Activated B cell treated with CpG ODN at 0.5 μM for 24 hours (primary cell): ENCODE measurements at regions of chrX and their contacts with region 1.

Region 1: DNA sequence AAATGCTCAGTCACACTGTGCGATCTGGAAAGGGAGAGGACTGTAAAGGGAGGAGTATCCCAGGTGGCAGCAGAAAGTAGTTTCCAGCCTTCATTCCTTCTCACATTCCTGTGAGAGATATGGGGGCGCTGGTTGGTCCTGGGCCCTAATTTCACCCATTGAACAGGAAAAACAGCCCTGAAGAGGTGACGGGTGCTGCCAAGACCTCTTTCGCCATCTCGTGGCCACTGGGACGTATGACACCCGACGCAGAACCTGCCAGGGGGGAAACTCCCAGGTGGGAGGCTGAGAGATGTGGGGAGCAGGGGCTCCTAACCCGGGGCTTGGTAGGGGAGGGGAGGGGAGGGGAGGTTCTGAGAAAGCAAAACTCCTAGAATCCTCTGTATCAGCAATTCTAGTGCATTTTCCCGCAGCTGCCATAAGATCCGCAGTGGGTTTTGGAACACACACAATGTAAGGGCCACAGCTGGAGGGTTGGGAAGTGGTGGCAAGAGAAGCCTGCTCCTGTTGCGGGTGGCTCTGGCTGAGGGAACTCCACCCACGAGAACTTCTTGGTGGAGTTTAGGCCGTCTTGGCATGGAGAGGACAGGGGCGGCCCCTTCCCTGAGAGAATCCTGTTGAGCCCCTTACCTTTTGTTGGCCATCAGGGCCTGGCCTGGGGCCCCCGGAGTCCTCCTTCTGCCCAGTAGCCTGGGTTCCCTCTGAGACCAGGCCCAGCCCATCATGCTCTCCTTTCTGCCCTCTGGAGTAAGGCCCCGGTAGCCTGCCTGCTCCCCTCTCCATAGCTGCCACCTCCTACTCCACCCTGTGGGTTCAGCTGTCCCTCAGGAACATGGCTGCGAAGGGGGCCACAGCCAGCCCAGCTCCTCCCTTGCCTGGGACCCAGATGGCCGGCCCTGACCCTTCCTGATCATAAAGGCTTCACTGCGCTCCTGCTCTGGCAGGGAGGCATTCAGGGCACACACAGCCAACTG is 134.1 kb downstream of the OR13H1 start:
- DNase-seq: peak; percentile 15
- ATAC-seq: peak; percentile 40
- H3K4me3 Mint-ChIP-seq: no peak overlapping the region
- H3K27ac Mint-ChIP-seq: no peak overlapping the region
- H3K4me1 Mint-ChIP-seq: no peaks in the 10 kb centered on the region
- H3K27me3 Mint-ChIP-seq: no peaks in the 10 kb centered on the region
- CTCF ChIP-seq: no peak

Region 2: DNA sequence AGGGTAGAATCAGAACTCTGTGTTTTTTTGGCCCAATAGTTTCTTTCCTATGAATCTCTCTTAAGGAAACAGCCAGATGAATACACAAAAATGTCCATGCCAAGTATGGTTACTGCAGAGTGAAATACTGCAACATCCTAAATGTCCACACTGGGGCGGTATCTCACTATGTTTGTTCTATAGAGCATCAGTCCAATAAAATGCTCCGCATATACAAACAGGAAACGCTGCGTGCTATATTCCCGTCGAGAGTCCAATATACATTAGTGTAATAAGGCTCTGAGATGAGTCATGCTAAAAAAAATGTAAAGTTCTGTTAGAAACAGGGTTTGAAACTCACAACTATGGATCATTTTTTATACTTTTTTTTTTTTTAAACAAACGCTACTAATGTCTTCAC is 702.0 kb before region 1 on chrX:
- CTCF ChIA-PET with region 1: no interaction called
- POLR2A ChIA-PET with region 1: no interaction called
- intact Hi-C with region 1: loop called (anchors 5 kb)
- DNase-seq: no peak
- ATAC-seq: no peak
- H3K4me3 Mint-ChIP-seq: no peak overlapping the region
- H3K27ac Mint-ChIP-seq: no peak overlapping the region
- H3K4me1 Mint-ChIP-seq: no peaks in the 10 kb centered on the region
- H3K27me3 Mint-ChIP-seq: peaks cover 2% of the 10 kb centered on the region
- CTCF ChIP-seq: no peak

Region 3: DNA sequence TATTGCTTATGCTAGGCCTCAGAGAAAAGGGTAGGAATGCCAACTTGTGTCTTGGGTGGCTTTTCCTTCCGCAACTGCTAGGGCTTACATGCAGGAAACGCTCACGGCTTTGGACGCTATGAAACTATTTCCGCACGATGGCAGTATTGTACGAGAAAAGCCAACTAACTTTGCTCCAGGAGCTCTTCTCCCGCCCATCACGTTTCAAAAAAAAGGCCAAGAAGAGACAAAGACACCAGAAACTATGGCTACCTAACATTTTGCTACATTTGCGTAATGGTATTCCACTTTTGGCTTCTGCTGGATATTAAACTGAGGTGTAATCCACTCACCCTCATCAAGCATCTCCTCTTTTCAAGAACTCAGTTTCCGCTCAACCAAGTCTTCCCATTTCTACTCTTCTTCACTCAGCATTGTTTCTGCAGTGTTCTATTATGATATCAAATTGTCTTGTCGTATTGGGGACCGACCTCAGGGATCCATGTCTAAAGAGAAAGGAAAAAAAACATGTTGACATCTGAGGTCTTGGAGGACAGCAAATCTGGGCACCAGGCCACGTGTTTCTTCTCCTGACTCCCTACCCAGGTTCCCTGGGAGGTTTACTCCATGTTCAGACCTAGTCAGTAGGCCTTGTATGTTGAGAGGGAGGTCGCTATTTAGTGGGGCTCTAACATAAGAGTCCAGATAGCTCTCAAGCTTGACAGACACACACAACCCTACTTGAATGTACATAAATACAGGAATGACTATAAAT is 105.8 kb after region 1 on chrX:
- CTCF ChIA-PET with region 1: no interaction called
- POLR2A ChIA-PET with region 1: no interaction called
- intact Hi-C with region 1: no loop called
- DNase-seq: no peak
- ATAC-seq: no peak
- H3K4me3 Mint-ChIP-seq: no peak overlapping the region
- H3K27ac Mint-ChIP-seq: no peak overlapping the region
- H3K4me1 Mint-ChIP-seq: no peaks in the 10 kb centered on the region
- H3K27me3 Mint-ChIP-seq: no peaks in the 10 kb centered on the region
- CTCF ChIP-seq: no peak